H1 (cell line): ENCODE measurements at regions of chr16 and their contacts with region 1.

Region 1: GRCh38 chr16:15777533-15778203 is 79.2 kb downstream of the MYH11 start:
- DNase-seq: peak; percentile 41 to 51
- H3K4me3 ChIP-seq: no peak overlapping the region
- H3K27ac ChIP-seq: no peak overlapping the region
- H3K4me1 ChIP-seq: no peaks in the 10 kb centered on the region
- H3K27me3 ChIP-seq: peaks cover 0 to 6% (median 0%) of the 10 kb centered on the region in 4 experiments; a peak in 2 of 7 replicates
- CTCF ChIP-seq: peak; percentile 60 to 95 (median 89)
- EP300 ChIP-seq: no peak
- POLR2A ChIP-seq: no peak
- RAD21 ChIP-seq: peak; percentile 95 to 96

Region 2: DNA sequence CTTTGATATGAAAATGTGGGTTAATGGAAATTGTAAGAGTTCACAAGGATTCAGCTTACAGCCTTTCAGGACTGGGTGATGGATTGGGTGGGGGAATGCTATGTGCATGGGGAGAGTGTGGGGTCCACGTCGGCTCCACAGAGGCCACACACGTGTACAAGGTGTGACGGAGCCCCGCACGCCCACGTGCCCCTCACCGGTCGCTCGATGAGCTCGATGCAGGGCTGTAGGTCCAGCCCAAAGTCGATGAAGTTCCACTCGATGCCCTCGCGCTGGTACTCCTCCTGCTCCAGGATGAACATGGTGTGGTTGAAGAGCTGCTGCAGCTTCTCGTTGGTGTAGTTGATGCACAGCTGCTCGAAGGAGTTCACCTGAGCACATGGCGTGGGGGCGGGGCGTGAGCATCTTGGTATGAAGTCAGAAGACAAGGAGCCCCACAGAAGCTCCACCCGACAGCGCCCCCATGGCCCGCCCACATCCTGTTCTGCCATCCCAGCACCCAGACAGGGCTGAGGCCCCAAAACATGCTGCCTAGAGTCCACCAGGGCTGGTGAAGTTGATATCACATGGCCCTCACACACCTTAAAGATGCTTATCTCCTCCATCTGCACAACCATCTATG is 19.9 kb before region 1 on chr16:
- CTCF ChIA-PET with region 1: interaction called, 14 read pairs
- POLR2A ChIA-PET with region 1: no interaction called
- DNase-seq: peak in 1 of 2 experiments; percentile 55
- H3K4me3 ChIP-seq: no peak overlapping the region
- H3K27ac ChIP-seq: no peak overlapping the region
- H3K4me1 ChIP-seq: peaks cover 0 to 2% (median under 1%) of the 10 kb centered on the region in 4 experiments; a peak in 1 of 7 replicates
- H3K27me3 ChIP-seq: no peaks in the 10 kb centered on the region
- CTCF ChIP-seq: no peak
- EP300 ChIP-seq: no peak
- POLR2A ChIP-seq: no peak
- RAD21 ChIP-seq: no peak

Region 3: GRCh38 chr16:15817446-15817845 is 39.8 kb after region 1 on chr16:
- CTCF ChIA-PET with region 1: interaction called, 44 read pairs
- POLR2A ChIA-PET with region 1: no interaction called
- DNase-seq: no peak
- H3K4me3 ChIP-seq: no peak overlapping the region
- H3K27ac ChIP-seq: no peak overlapping the region
- H3K4me1 ChIP-seq: no peaks in the 10 kb centered on the region
- H3K27me3 ChIP-seq: no peaks in the 10 kb centered on the region
- CTCF ChIP-seq: no peak
- EP300 ChIP-seq: no peak
- POLR2A ChIP-seq: no peak
- RAD21 ChIP-seq: no peak

Region 4: DNA sequence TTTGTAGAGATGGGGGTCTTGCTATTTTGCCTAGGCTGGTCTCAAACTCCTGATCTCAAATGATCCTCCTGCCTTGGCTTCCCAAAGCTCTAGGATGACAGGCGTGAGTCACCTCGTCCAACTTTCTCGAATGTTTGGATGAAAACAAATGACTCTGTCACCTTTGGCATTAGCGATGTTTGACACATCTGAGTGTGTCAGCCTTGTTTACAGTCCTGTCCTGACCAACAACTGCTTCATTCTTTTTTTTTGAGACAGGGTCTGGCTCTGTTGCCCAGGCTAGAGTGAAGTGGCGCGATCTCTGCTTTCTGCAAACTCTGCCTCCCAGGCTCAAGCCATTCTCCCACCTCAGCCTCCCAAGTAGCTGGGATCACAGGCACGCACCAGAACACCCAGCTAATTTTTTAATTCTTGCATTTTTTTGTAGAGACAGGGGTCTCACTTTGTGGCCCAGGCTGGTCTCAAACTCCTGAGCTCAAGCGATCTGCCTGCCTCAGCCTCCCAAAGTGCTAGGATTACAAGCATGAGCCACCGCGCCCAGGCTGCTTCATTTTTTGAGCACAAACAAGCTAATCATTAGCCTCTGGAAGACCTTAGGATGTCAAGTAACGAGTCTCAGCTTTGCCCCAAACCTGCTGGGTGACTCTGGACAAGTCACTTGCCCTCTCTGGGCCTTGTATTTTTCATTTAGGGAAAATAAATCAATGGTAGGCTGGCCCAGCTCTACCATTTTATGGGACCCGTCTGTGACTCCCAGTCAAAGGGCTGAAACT is 71.7 kb after region 1 on chr16:
- CTCF ChIA-PET with region 1: interaction called, 13 read pairs
- POLR2A ChIA-PET with region 1: interaction called, 3 read pairs
- DNase-seq: no peak
- H3K4me3 ChIP-seq: no peak overlapping the region
- H3K27ac ChIP-seq: no peak overlapping the region
- H3K4me1 ChIP-seq: no peaks in the 10 kb centered on the region
- H3K27me3 ChIP-seq: no peaks in the 10 kb centered on the region
- CTCF ChIP-seq: no peak
- EP300 ChIP-seq: no peak
- POLR2A ChIP-seq: no peak
- RAD21 ChIP-seq: no peak